ENCODE measurements at regions of chr6 and their contacts with region 1.

Region 1: GRCh38 chr6:111129013-111129412 is 41.7 kb downstream of the SLC16A10 start:
- DNase-seq: peak; percentile 39 to 68
- ATAC-seq: peak; percentile 90 to 95 (median 92)
- H3K4me3 ChIP-seq: peak overlapping the region; percentile 3
- H3K27ac ChIP-seq: peak overlapping the region; percentile 68
- H3K4me1 ChIP-seq: peaks cover 77% of the 10 kb centered on the region
- H3K27me3 ChIP-seq: no peaks in the 10 kb centered on the region
- CTCF ChIP-seq: no peak

Region 2: DNA sequence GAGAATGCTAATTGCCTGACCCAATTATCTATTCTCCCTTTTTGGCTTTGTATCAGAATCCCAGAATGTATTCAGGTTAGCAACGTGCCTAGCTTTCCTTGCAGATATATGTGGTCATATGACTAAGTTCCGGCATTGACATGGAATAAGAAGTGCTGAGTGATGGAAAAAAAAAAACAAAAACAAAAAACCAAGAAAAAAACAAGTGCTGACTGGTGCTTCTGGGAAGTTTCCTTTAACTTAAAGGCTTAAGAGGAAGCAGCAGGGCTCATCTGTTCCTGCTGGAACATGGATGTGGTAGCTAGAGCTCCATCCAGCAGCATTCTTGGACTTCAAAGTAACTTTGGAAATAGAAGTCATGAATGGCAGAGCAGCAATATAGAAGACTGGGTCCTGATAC is 157.5 kb before region 1 on chr6:
- intact Hi-C with region 1: no loop called
- DNase-seq: no peak
- ATAC-seq: no peak
- H3K4me3 ChIP-seq: no peak overlapping the region
- H3K27ac ChIP-seq: no peak overlapping the region
- H3K4me1 ChIP-seq: no peaks in the 10 kb centered on the region
- H3K27me3 ChIP-seq: no peaks in the 10 kb centered on the region
- CTCF ChIP-seq: no peak

Region 3: DNA sequence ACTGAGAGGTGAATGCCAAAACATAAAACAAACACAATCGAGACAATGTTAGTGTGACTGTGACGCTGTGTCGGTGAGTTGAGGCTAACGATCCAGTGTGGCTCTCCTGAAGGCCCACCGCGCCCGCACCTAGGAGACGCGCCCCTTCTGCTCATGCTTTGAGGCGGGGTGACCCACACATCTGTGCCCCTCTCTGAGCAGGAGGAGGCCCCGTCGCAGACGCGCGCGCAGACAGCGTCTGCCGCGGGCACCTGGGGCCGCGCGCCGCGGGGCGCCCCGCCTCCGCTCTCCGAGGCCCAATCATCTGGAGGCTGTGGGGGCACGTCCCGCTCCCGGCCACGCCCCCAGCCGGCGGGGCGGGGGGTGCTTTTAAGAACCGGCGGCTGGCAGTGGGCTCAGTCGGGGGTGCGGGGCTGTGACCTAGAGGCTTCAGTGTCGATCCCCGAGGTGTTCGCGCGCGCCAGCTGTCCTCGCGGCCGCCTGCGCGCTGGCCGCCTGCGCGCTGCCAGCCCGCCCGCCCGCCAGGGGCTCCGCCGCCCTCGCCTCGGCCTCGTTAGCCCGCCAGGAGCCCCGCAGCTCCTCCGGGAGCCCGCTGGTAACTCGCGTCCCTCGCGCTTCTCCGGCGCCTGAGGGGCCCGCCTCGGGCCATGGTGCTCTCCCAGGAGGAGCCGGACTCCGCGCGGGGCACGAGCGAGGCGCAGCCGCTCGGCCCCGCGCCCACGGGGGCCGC is 41.7 kb before region 1 on chr6 and contains the start of gene SLC16A10:
- intact Hi-C with region 1: loop called in 1 of 2 experiments (anchors 5 kb)
- DNase-seq: peak; percentile 82 to 94
- ATAC-seq: peak; percentile 89 to 94 (median 92)
- H3K4me3 ChIP-seq: peak within 1 kb of the TSS; percentile 92
- H3K27ac ChIP-seq: peak within 1 kb of the TSS; percentile 87
- H3K4me1 ChIP-seq: peaks cover 11% of the 10 kb centered on the region
- H3K27me3 ChIP-seq: peaks cover 0 to 7% (median 3%) of the 10 kb centered on the region in 3 donors
- CTCF ChIP-seq: peak; percentile 13
- total RNA-seq, gene SLC16A10: 33.9 to 106 (median 56.1) TPM

Region 4: GRCh38 chr6:111301946-111302345 is 172.9 kb after region 1 on chr6:
- intact Hi-C with region 1: no loop called
- DNase-seq: no peak
- ATAC-seq: peak; percentile 37 to 63 (median 58)
- H3K4me3 ChIP-seq: no peak overlapping the region
- H3K27ac ChIP-seq: peak overlapping the region; percentile 73
- H3K4me1 ChIP-seq: peaks cover 8% of the 10 kb centered on the region
- H3K27me3 ChIP-seq: no peaks in the 10 kb centered on the region
- CTCF ChIP-seq: no peak

Measured in psoas muscle (tissue), 8 donors.